Breast epithelium (tissue), 4 donors: ENCODE measurements at regions of chr12 and their contacts with region 1.

Region 1: GRCh38 chr12:1594261-1595025 is at the start of gene FBXL14:
- DNase-seq: peak; percentile 60 to 81
- H3K4me3 ChIP-seq: peak within 1 kb of the TSS; percentile 77 to 87 (median 83)
- H3K27ac ChIP-seq: peak within 1 kb of the TSS; percentile 94 to 95
- H3K4me1 ChIP-seq: peaks cover 23 to 38% of the 10 kb centered on the region in 2 donors
- H3K27me3 ChIP-seq: no peaks in the 10 kb centered on the region
- CTCF ChIP-seq: peak in 1 of 3 donors; percentile 9
- POLR2A ChIP-seq: no peak
- total RNA-seq, gene FBXL14: 8.2 to 12.9 (median 8.5) TPM

Region 2: DNA sequence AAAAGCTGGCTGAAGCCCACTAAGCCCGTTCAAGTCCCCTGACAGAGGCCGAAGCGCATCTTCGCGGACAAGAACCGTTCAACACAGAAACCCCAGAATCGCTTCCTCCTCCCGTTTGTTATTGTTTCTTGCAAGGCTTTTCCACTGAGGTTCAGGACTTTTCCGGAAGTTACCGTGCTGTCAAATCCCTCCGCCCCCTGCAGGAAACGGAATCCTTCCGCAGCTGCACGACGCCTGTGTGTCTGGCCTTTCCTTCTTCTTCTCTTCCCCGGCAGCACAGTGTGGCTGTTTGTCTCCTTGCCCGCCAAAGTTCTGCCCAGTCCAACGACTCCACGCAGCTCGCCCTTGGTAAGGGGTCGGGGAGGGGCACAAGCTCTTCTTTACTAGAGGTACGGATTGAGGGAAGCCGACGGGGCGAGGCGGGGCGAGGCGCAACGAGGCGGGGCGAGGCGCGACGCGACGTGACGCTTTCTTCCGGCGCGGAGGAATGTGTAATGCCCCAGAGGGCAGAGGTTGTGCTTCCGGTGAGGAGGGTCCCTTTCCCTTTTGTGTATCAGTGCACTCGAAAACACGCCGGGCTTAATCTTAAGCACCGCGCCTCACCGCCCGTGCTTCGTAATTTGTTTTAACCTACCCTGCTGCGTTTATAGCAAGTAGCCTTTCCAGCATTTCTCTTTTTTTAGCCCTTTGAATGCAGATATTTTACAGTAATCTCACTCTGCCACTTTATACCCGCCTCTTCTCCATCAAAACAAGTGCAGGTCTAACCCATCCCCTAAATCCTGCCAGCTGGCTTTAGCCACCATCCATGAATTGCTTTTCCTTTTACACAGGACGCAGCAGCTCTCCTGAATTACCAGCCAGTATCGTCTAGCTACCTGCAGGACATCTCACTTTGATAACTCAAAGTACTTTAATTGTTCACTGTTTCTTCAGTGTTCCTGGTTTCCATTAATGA is 1205.0 kb before region 1 on chr12 and contains the start of gene KDM5A:
- intact Hi-C with region 1: loop called (anchors 10 kb)
- DNase-seq: peak; percentile 80 to 87
- H3K4me3 ChIP-seq: peak within 1 kb of the TSS; percentile 87 to 90 (median 88)
- H3K27ac ChIP-seq: peak within 1 kb of the TSS; percentile 94 to 96
- H3K4me1 ChIP-seq: peaks cover 0 to 4% of the 10 kb centered on the region in 2 donors
- H3K27me3 ChIP-seq: no peaks in the 10 kb centered on the region
- CTCF ChIP-seq: peak in 1 of 3 donors; percentile 26
- POLR2A ChIP-seq: no peak
- total RNA-seq, gene KDM5A: 55.8 to 83.6 (median 57.4) TPM

Region 3: GRCh38 chr12:1760566-1761382 is 166.3 kb after region 1 on chr12:
- intact Hi-C with region 1: no loop called
- DNase-seq: no peak
- H3K4me3 ChIP-seq: no peak overlapping the region
- H3K27ac ChIP-seq: no peak overlapping the region
- H3K4me1 ChIP-seq: no peaks in the 10 kb centered on the region
- H3K27me3 ChIP-seq: no peaks in the 10 kb centered on the region
- CTCF ChIP-seq: no peak
- POLR2A ChIP-seq: no peak